Activated CD4-positive, alpha-beta memory T cell treated with anti-CD3 and anti-CD28 coated beads, Interleukin-2, amount 10 ng/mL, durations not matched to agents 7 days and 5 days (primary cell): ENCODE measurements at regions of chr10 and their contacts with region 1.

Region 1: DNA sequence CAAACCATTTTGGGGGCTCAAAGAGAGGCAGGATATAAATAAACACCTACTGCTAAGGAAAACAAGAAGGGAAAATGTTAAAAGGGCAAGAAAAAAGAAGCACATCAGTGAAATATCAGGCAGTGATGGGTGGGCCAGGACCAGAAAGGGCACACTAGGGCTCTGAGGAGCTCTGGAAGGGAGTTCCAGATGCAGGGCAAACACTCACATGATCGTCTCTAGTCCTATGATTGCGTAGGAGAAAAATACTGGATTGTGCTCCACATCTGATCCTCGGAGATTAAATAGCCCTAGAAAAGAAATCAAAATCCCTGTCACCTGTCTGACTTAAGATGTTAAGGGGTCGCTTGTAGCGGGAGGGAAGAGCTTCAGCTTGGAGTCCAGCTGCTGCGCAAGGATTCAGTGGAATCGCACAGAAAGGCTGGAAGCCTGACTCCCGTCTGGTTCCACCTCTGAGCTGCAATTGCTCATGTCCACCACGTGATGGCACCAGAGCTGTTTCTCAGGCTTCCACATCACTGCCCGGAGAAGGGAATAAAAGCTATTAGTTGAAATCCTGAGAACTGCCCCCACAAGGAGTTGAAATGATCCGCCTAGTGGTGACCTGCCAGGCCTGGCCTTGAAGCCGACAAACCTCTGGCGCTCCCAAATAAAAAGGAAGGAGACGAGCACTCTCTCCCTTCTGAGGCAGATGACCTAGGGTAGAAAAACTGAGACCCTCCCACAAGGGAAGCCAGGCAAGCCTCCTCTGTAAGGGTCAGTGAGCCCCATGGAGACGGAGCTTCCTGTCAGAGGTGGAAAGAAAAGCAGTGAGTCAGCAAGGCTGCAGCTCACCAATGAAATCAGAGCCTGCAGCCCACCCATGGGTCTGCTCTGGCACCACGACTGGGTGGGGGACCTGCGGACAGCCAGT is 39.2 kb downstream of the XPNPEP1 start:
- DNase-seq: peak; percentile 67
- H3K4me3 Mint-ChIP-seq: no peak overlapping the region
- H3K27ac Mint-ChIP-seq: no peak overlapping the region
- H3K4me1 Mint-ChIP-seq: peaks cover 29% of the 10 kb centered on the region
- H3K27me3 Mint-ChIP-seq: no peaks in the 10 kb centered on the region

Region 2: GRCh38 chr10:109902934-109903589 is 18.9 kb after region 1 on chr10:
- CTCF ChIA-PET with region 1: interaction called, 25 read pairs
- POLR2A ChIA-PET with region 1: interaction called, 6 read pairs
- DNase-seq: peak; percentile 38
- H3K4me3 Mint-ChIP-seq: peak overlapping the region; percentile 61
- H3K27ac Mint-ChIP-seq: peak overlapping the region; percentile 91
- H3K4me1 Mint-ChIP-seq: peaks cover 54% of the 10 kb centered on the region
- H3K27me3 Mint-ChIP-seq: no peaks in the 10 kb centered on the region

Region 3: DNA sequence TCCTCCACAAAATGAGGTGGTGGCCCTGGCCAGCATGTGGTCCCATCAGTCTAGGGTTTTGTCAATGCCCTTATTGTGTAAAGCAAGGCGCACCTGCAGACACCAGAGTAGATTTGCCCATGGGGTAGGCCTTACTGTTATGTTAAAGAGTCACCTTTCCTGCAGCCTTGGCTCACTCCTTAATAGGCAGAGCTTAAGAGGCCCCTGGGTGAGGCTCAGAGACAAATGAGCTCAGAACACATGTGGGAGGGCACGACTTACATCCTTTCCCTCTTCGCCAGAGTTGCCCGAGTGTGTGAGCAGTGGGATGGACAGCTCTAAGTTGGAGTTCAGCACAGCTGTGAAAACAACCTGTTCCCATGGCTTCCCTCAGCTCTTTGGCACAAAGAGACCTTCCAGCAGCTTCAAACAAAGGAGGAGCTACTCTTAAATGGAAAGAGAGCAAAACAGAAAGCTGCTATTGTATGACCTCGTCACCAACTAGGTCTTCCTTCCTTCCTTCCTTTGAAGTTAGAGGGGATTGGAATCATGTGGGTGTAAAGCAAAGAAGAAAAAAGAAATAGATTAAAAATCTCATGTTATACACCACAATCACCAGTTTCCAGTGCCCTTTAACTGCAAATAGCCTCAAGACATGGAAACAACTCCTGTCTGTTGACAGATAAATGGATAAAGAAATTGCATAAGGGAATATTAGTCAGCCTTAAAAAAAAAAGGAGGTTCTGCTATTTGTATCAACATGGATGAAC is 51.0 kb after region 1 on chr10:
- CTCF ChIA-PET with region 1: interaction called, 11 read pairs
- POLR2A ChIA-PET with region 1: interaction called, 4 read pairs
- DNase-seq: no peak
- H3K4me3 Mint-ChIP-seq: peak overlapping the region; percentile 62
- H3K27ac Mint-ChIP-seq: peak overlapping the region; percentile 83
- H3K4me1 Mint-ChIP-seq: peaks cover 31% of the 10 kb centered on the region
- H3K27me3 Mint-ChIP-seq: no peaks in the 10 kb centered on the region

Region 4: GRCh38 chr10:109978481-109978880 is 94.4 kb after region 1 on chr10:
- CTCF ChIA-PET with region 1: interaction called, 29 read pairs
- POLR2A ChIA-PET with region 1: no interaction called
- DNase-seq: peak; percentile 70
- H3K4me3 Mint-ChIP-seq: no peak overlapping the region
- H3K27ac Mint-ChIP-seq: no peak overlapping the region
- H3K4me1 Mint-ChIP-seq: peaks cover 6% of the 10 kb centered on the region
- H3K27me3 Mint-ChIP-seq: no peaks in the 10 kb centered on the region

Region 5: GRCh38 chr10:110137142-110137545 is 253.0 kb after region 1 on chr10:
- CTCF ChIA-PET with region 1: interaction called, 13 read pairs
- POLR2A ChIA-PET with region 1: interaction called, 3 read pairs
- DNase-seq: no peak
- H3K4me3 Mint-ChIP-seq: no peak overlapping the region
- H3K27ac Mint-ChIP-seq: peak overlapping the region; percentile 32
- H3K4me1 Mint-ChIP-seq: peaks cover 41% of the 10 kb centered on the region
- H3K27me3 Mint-ChIP-seq: no peaks in the 10 kb centered on the region

Region 6: GRCh38 chr10:110584006-110584405 is 699.9 kb after region 1 on chr10:
- CTCF ChIA-PET with region 1: no interaction called
- POLR2A ChIA-PET with region 1: no interaction called
- DNase-seq: no peak
- H3K4me3 Mint-ChIP-seq: no peak overlapping the region
- H3K27ac Mint-ChIP-seq: no peak overlapping the region
- H3K4me1 Mint-ChIP-seq: peaks cover 2% of the 10 kb centered on the region
- H3K27me3 Mint-ChIP-seq: no peaks in the 10 kb centered on the region